IMR-90 (cell line): ENCODE measurements at regions of chr1 and their contacts with region 1.

Region 1: GRCh38 chr1:206663832-206664652 is 20.7 kb upstream of the MAPKAPK2 start:
- DNase-seq: peak; percentile 66
- ATAC-seq: peak; percentile 93
- H3K4me3 ChIP-seq: no peak overlapping the region
- H3K27ac ChIP-seq: no peak overlapping the region
- H3K4me1 ChIP-seq: no peaks in the 10 kb centered on the region
- H3K27me3 ChIP-seq: peaks cover 26% of the 10 kb centered on the region
- CTCF ChIP-seq: peak; percentile 85
- POLR2A ChIP-seq: no peak
- RAD21 ChIP-seq: peak; percentile 82

Region 2: GRCh38 chr1:206489980-206490770 is 173.9 kb before region 1 on chr1:
- CTCF ChIA-PET with region 1: interaction called, 3 read pairs
- POLR2A ChIA-PET with region 1: no interaction called
- dilution Hi-C with region 1: no loop called
- in situ Hi-C with region 1: loop called (anchors 10 kb)
- intact Hi-C with region 1: loop called (anchors 1 kb)
- DNase-seq: peak; percentile 69
- ATAC-seq: peak; percentile 98
- H3K4me3 ChIP-seq: no peak overlapping the region
- H3K27ac ChIP-seq: no peak overlapping the region
- H3K4me1 ChIP-seq: peaks cover 4% of the 10 kb centered on the region
- H3K27me3 ChIP-seq: no peaks in the 10 kb centered on the region
- CTCF ChIP-seq: peak; percentile 96
- POLR2A ChIP-seq: peak; percentile 53; the same call in 1 of the 2 replicates
- RAD21 ChIP-seq: peak; percentile 99

Region 3: DNA sequence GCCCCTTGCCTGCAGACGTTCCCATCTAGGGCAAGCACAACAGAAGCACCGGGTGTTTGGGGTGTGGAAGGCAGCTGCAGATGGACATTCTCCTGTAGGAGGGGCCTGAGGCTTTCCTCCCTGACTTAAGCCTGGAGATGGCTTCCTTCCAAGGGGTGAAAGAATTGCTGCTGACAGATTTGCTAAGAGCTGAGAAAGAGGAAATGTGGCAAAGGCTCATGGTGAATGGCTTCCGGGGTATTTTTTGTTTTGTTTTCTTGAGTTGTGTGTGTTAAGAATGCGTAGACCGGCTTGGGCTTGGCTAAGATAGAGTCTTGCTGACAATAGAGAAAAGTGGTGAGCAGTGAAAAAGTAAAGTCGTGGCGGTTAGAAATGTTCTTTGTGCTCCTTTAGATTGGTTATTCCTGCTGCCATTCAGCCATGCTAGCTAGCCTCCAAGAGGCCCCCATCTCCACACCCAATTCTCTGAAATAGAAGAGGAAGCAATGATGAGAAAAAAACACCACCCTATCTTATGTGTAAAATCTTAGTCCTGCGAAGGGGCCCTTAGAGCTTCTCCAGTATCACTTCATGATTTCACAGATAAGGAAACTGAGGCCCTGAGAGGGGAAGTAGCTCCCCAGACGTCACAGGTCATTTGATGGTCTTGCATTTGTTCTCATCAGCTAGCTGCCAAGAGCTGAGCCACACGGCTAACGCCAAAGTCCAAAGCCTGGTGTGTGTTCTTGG is 88.7 kb before region 1 on chr1:
- CTCF ChIA-PET with region 1: no interaction called
- POLR2A ChIA-PET with region 1: no interaction called
- dilution Hi-C with region 1: no loop called
- in situ Hi-C with region 1: no loop called
- intact Hi-C with region 1: no loop called
- DNase-seq: peak; percentile 87
- ATAC-seq: peak; percentile 87
- H3K4me3 ChIP-seq: no peak overlapping the region
- H3K27ac ChIP-seq: peak overlapping the region; percentile 14; the same call in 1 of the 2 replicates
- H3K4me1 ChIP-seq: peaks cover 4% of the 10 kb centered on the region; the same call in 1 of the 2 replicates
- H3K27me3 ChIP-seq: no peaks in the 10 kb centered on the region
- CTCF ChIP-seq: no peak
- POLR2A ChIP-seq: no peak
- RAD21 ChIP-seq: no peak

Region 4: DNA sequence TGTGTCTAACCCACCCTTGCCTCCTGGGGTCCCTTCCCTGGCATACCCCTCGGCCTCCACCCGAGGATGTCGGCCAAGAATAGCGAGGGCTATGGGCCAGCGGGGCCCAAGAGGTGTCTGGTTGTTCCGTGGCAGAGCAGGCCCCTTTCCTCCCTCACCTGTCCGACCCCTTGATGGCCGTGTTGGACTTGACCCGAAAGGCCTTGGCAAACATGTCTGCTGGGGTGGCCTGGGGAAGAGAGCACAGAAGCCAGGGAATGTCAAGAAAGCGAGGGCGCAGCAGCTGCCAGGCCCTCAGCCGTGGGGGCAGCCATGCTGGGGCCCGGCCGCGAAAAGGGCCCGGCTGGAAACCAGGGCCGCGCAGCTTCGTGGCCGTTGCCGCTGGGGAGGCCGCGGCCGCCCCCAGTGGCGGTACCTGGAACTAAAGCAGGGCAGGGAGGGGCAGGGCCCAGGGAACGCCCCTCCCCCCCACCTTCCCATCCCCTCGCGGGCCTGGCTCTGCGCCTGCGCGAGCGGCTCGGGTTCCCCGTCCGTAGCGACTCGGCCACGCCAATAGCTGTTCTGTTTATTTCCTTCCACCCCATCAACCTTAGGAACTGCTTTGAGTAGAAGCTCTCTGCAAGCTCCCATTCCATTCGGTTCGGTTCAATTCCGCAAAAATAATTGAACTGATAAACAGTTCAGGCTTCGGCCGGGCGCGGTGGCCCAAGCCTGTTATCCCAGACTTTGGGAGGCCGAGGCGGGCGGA is 51.7 kb before region 1 on chr1 and contains the start of gene EIF2D:
- CTCF ChIA-PET with region 1: interaction called, 17 read pairs
- POLR2A ChIA-PET with region 1: interaction called, 3 read pairs
- dilution Hi-C with region 1: no loop called
- in situ Hi-C with region 1: no loop called
- intact Hi-C with region 1: loop called (anchors 1 kb)
- DNase-seq: peak; percentile 87
- ATAC-seq: peak; percentile 100
- H3K4me3 ChIP-seq: peak within 1 kb of the TSS; percentile 71
- H3K27ac ChIP-seq: peak within 1 kb of the TSS; percentile 96
- H3K4me1 ChIP-seq: peaks cover 4% of the 10 kb centered on the region
- H3K27me3 ChIP-seq: peaks cover 4% of the 10 kb centered on the region; the same call in 1 of the 2 replicates
- CTCF ChIP-seq: peak; percentile 99
- POLR2A ChIP-seq: peak; percentile 97
- RAD21 ChIP-seq: peak; percentile 61
- total RNA-seq, gene EIF2D: 51.7 and 69.4 TPM in 2 replicates

Region 5: GRCh38 chr1:206628916-206629315 is 35.1 kb before region 1 on chr1:
- CTCF ChIA-PET with region 1: interaction called, 37 read pairs
- POLR2A ChIA-PET with region 1: no interaction called
- dilution Hi-C with region 1: no loop called
- in situ Hi-C with region 1: loop called (anchors 5 kb)
- intact Hi-C with region 1: loop called (anchors 1 kb)
- DNase-seq: no peak
- ATAC-seq: no peak
- H3K4me3 ChIP-seq: no peak overlapping the region
- H3K27ac ChIP-seq: no peak overlapping the region
- H3K4me1 ChIP-seq: peaks cover 4% of the 10 kb centered on the region
- H3K27me3 ChIP-seq: peaks cover 16% of the 10 kb centered on the region
- CTCF ChIP-seq: no peak
- POLR2A ChIP-seq: no peak
- RAD21 ChIP-seq: no peak

Region 6: DNA sequence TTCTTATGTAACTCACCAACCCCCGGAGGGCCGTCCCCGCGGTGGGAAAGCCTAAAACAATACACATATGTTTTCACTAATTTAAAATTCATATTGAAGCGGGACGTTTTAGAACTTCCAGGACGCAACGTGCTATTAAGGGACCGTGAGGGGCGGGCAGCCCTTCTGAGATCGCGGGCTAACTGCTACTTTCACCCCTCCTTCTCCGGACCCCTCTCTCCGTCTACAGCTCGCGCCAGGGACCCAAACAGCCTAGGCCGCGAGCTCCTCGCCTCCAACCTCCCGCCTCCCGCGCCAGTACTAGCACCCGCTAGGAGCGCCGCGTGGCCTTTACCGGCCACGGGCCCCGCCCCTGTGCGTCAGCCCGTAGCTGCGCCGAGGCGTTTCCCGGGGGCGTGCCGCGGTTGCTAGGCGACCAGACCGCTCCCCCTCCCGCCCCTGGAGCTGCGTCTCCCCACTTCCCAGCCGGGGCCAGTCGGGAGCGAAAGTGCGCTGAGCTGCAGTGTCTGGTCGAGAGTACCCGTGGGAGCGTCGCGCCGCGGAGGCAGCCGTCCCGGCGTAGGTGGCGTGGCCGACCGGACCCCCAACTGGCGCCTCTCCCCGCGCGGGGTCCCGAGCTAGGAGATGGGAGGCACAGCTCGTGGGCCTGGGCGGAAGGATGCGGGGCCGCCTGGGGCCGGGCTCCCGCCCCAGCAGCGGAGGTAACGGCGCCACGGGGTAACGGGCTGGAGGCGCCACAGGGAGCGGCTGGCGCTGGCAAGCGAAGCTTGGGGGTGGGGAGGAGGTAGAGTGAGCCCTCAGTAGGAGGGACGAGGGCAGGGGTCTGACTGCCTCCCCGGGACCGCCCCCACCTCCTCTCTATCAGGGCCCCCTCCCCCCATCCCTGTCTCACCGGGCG is 28.7 kb before region 1 on chr1 and contains the start of gene DYRK3:
- CTCF ChIA-PET with region 1: interaction called, 37 read pairs
- POLR2A ChIA-PET with region 1: interaction called, 4 read pairs
- dilution Hi-C with region 1: no loop called
- in situ Hi-C with region 1: no loop called
- intact Hi-C with region 1: loop called (anchors 1 kb)
- DNase-seq: peak; percentile 92
- ATAC-seq: peak; percentile 88
- H3K4me3 ChIP-seq: peak within 1 kb of the TSS; percentile 94
- H3K27ac ChIP-seq: peak within 1 kb of the TSS; percentile 69
- H3K4me1 ChIP-seq: peaks cover 8% of the 10 kb centered on the region
- H3K27me3 ChIP-seq: no peaks in the 10 kb centered on the region
- CTCF ChIP-seq: peak; percentile 8; the same call in 1 of the 2 replicates
- POLR2A ChIP-seq: peak; percentile 96
- RAD21 ChIP-seq: no peak
- total RNA-seq, gene DYRK3: 21.1 and 22.0 TPM in 2 replicates

Region 7: DNA sequence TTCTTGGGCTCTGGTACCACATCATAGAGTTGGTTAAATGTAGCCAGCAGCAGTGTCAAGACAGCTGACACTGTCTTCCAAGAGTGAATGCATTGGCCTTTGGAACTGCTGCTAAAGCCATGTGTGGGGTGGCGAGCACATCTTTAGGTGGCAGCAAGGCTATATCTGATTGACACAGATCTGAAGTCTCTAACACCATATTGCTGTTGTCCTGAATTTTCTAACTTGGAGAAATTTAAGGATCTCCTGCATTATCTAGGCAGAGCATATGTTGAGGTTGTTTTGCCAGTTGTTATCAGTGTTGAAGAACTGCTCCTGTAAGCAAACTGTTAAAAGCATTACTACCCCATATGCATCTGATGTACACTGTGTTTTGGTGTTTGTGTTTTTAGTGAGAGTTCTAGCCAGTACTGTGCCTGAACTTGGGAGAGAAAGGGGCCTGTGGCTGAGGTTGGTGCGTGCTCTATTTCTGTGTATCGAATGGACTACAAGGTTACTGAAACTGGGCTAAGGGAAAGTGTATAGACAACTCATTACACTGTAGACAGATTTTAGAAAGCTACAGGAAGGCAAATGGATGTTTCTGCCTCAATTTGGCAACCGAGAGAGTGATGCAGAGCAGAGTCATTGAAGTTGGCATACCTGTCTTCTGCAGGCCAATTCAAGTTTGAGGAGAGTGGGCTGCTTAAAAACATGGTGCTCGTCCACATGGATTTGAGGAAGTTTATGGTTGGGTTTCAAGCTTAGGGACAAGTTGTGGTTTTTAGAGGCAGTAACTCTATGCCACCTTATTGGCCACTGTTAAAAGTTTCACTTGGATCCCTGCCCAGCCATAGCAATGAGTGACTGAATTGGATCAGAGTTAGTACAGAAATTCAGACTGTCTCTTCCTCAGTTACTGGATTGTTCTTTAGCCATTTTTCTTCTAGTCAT is 11.8 kb before region 1 on chr1:
- CTCF ChIA-PET with region 1: interaction called, 12 read pairs
- POLR2A ChIA-PET with region 1: no interaction called
- dilution Hi-C with region 1: no loop called
- in situ Hi-C with region 1: no loop called
- intact Hi-C with region 1: no loop called
- DNase-seq: no peak
- ATAC-seq: no peak
- H3K4me3 ChIP-seq: no peak overlapping the region
- H3K27ac ChIP-seq: no peak overlapping the region
- H3K4me1 ChIP-seq: peaks cover 2% of the 10 kb centered on the region; the same call in 1 of the 2 replicates
- H3K27me3 ChIP-seq: no peaks in the 10 kb centered on the region
- CTCF ChIP-seq: no peak
- POLR2A ChIP-seq: no peak
- RAD21 ChIP-seq: no peak

Region 8: DNA sequence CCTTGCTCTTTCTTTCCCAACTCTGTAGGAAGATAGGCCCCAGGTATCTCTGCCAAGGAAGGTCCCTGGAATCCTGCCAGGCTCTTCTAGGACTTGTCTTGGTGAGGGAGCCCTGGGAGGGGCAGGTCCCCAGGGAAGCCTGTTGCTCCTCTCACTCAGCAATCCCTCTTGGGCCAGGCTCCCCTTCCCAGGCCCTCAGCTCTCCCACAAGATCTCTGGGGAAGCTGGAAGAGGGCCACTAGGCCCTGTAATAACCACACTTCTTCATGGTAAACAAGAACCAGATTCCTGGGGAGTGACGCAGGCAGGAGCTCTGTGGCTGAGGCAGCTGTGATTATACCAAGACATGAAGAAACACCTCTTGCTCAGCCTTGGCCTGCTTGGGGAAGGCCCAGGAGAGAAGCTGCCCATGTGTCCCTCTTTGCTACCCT is 10.7 kb after region 1 on chr1:
- CTCF ChIA-PET with region 1: interaction called, 14 read pairs
- POLR2A ChIA-PET with region 1: no interaction called
- dilution Hi-C with region 1: no loop called
- in situ Hi-C with region 1: no loop called
- intact Hi-C with region 1: no loop called
- DNase-seq: peak; percentile 100
- ATAC-seq: peak; percentile 98
- H3K4me3 ChIP-seq: no peak overlapping the region
- H3K27ac ChIP-seq: peak overlapping the region; percentile 79
- H3K4me1 ChIP-seq: peaks cover 21% of the 10 kb centered on the region
- H3K27me3 ChIP-seq: no peaks in the 10 kb centered on the region
- CTCF ChIP-seq: no peak
- POLR2A ChIP-seq: no peak
- RAD21 ChIP-seq: peak; percentile 10; the same call in 1 of the 2 replicates